Calu3 (cell line): ENCODE measurements at regions of chr6 and their contacts with region 1.

Region 1: DNA sequence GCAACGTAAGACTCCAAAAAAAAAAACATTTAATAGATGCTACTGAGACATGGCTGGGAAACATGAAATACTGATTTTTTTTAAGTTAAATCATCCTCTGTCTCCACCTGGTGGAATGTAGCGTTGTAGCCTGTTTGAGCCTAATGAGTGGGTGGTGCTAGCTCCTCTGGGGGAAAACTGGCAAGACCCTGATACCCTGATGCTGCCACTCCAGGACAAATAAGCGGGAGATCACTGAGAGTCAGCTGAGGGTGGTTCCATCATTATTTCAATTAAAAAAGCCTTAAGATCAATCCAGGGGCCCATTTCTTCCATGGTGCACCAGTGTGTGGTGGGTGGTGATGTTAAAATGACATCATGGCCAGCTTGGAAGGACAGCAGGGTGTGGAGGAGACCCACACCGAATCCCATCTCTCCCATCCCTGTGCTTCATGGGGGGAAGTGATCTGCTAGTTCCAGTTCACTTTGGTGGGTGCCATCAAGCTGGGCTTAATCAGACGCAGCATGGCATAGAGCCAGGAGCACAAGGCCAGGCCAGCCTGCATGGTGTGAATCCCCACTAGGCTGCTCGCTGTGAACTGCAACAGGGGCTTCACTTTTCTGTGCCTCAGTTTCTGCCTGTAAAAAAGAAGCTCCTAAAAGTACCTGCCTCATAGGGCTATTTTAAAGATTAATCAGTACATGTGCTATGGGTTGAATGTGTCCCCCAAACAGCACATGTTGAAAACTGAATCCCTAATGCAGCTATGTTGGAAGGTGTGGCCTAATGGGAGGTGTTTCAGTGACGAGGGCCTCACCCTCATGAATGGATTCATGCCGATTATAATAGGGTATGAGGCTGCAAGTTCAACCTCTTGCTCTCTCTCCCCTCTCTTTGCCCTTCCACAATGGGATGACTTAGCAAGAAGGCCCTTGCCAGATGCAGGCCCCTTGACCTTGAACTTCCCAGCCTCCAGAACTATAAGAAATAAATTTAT is 13.0 kb upstream of the MRPS10 start:
- DNase-seq: peak; percentile 33
- H3K4me3 Mint-ChIP-seq: no peak overlapping the region
- H3K27ac Mint-ChIP-seq: no peak overlapping the region
- H3K4me1 Mint-ChIP-seq: peaks cover 51% of the 10 kb centered on the region
- H3K27me3 Mint-ChIP-seq: no peaks in the 10 kb centered on the region
- CTCF ChIP-seq: peak; percentile 82

Region 2: DNA sequence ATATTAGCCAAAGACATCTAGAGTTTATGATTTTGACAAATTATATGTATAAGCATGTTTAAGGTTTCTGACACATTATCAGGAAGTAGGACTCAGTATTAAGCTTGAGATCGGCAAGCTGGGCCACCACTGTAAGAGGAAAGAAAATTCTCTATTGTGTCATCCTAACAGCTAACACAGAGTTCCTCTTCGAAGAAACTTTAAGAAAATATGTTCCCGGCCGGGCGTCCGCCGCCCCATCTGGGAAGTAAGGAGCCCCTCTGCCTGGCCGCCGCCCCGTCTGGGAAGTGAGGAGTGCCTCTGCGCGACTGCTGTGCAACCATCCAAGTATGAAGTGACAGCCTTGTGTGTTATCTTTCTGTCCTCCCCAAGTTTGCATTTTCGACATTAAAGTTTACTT is 358.5 kb before region 1 on chr6:
- CTCF ChIA-PET with region 1: no interaction called
- intact Hi-C with region 1: no loop called
- DNase-seq: no peak
- H3K4me3 Mint-ChIP-seq: no peak overlapping the region
- H3K27ac Mint-ChIP-seq: no peak overlapping the region
- H3K4me1 Mint-ChIP-seq: no peaks in the 10 kb centered on the region
- H3K27me3 Mint-ChIP-seq: no peaks in the 10 kb centered on the region
- CTCF ChIP-seq: no peak

Region 3: GRCh38 chr6:42166444-42167141 is 64.0 kb before region 1 on chr6:
- CTCF ChIA-PET with region 1: interaction called, 5 read pairs
- intact Hi-C with region 1: loop called (anchors 1 kb)
- DNase-seq: peak; percentile 90
- H3K4me3 Mint-ChIP-seq: no peak overlapping the region
- H3K27ac Mint-ChIP-seq: peak overlapping the region; percentile 54
- H3K4me1 Mint-ChIP-seq: peaks cover 11% of the 10 kb centered on the region
- H3K27me3 Mint-ChIP-seq: no peaks in the 10 kb centered on the region
- CTCF ChIP-seq: peak; percentile 94